ENCODE measurements at regions of chr3 and their contacts with region 1.

Region 1: DNA sequence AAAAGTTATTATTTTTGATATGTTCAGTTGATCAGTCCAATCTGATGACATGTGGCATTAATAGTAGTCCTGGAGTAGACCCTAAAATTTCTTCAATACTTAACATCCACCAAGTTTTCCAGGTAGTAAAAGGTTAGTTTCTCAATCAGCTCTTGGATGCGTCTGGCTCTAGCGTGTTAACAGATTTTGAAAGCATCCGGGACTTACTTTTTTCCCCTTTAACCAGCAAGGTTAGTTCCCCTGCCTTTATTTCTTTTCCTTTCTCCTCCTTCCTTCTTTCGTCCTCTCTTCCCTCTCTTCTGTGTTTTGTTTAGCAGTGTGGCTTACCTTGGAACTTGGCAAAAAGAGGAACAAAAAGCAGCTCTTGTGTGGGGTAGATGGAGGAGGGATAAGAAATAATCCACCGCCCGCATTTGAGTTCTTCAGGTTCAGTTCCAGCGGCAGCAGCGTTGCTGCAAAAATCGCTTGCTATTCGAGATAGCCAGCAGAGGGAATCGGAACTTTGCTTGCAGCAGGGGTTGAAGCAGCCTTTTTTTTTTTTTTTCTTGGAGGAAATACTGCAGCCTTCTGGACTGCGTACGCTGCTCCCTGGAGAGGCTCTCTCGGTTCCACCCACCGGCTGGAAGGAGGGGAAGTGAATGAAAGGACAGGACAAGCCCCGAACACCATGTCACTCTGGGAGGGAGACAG is at the start of gene RBMS3:
- DNase-seq: peak; percentile 90 to 93 (median 92)
- ATAC-seq: peak; percentile 91 to 95 (median 94)
- H3K4me3 ChIP-seq: peak within 1 kb of the TSS; percentile 43 to 84 (median 66)
- H3K27ac ChIP-seq: peak within 1 kb of the TSS; percentile 83 to 96 (median 91)
- H3K4me1 ChIP-seq: peaks cover 0 to 29% (median 13%) of the 10 kb centered on the region in 12 donors
- H3K27me3 ChIP-seq: no peaks in the 10 kb centered on the region
- CTCF ChIP-seq: peak; percentile 22 to 80 (median 54)
- POLR2A ChIP-seq: peak in 1 of 2 donors; percentile 58
- total RNA-seq, gene RBMS3: 19.0 to 35.6 (median 27.3) TPM

Region 2: GRCh38 chr3:28449398-28449797 is 831.2 kb before region 1 on chr3:
- intact Hi-C with region 1: no loop called
- DNase-seq: no peak
- ATAC-seq: no peak
- H3K4me3 ChIP-seq: no peak overlapping the region
- H3K27ac ChIP-seq: no peak overlapping the region
- H3K4me1 ChIP-seq: no peaks in the 10 kb centered on the region
- H3K27me3 ChIP-seq: no peaks in the 10 kb centered on the region
- CTCF ChIP-seq: no peak
- POLR2A ChIP-seq: no peak

Region 3: GRCh38 chr3:29144807-29145206 is 135.7 kb before region 1 on chr3:
- intact Hi-C with region 1: loop called in 2 of 10 experiments (anchors 5 to 10 kb)
- DNase-seq: peak in 4 of 5 donors; percentile 35 to 56 (median 44)
- ATAC-seq: peak; percentile 66 to 81 (median 78)
- H3K4me3 ChIP-seq: no peak overlapping the region
- H3K27ac ChIP-seq: no peak overlapping the region
- H3K4me1 ChIP-seq: peaks cover 0 to 32% (median 6%) of the 10 kb centered on the region in 12 donors
- H3K27me3 ChIP-seq: no peaks in the 10 kb centered on the region
- CTCF ChIP-seq: peak in 10 of 12 donors; percentile 21 to 62 (median 50)
- POLR2A ChIP-seq: no peak

Region 4: GRCh38 chr3:29324180-29324651 is 43.7 kb after region 1 on chr3:
- intact Hi-C with region 1: loop called in 3 of 10 experiments (anchors 5 kb)
- DNase-seq: peak in 4 of 5 donors; percentile 55 to 75 (median 58)
- ATAC-seq: peak; percentile 78 to 92 (median 86)
- H3K4me3 ChIP-seq: peak overlapping the region in 9 of 12 donors; percentile 8 to 49 (median 37)
- H3K27ac ChIP-seq: peak overlapping the region in 11 of 12 donors; percentile 50 to 90 (median 73)
- H3K4me1 ChIP-seq: peaks cover 0 to 59% (median 27%) of the 10 kb centered on the region in 12 donors
- H3K27me3 ChIP-seq: no peaks in the 10 kb centered on the region
- CTCF ChIP-seq: no peak
- POLR2A ChIP-seq: no peak

Region 5: DNA sequence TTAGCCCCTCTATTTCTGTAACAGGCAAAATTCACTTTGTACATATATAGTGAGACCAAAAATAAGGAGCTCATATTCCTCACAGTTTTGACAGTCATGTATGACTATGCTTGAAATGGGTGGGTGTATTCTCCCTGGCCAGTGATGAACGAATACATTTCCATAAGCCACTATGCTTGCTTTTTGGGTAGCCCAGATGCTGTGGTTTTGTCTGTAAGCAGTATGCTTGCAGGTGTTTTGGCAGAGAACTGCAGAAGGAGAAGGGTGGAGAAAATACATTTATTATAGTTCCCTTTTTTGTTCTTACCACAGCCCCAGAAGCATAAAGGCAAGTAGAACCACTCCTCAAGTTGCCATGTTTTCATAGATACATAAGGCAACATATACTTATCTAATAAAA is 131.6 kb after region 1 on chr3:
- intact Hi-C with region 1: loop called in 1 of 10 experiments (anchors 10 kb)
- DNase-seq: no peak
- ATAC-seq: no peak
- H3K4me3 ChIP-seq: no peak overlapping the region
- H3K27ac ChIP-seq: no peak overlapping the region
- H3K4me1 ChIP-seq: peaks cover 0 to 80% (median 35%) of the 10 kb centered on the region in 12 donors
- H3K27me3 ChIP-seq: no peaks in the 10 kb centered on the region
- CTCF ChIP-seq: no peak
- POLR2A ChIP-seq: no peak

Region 6: DNA sequence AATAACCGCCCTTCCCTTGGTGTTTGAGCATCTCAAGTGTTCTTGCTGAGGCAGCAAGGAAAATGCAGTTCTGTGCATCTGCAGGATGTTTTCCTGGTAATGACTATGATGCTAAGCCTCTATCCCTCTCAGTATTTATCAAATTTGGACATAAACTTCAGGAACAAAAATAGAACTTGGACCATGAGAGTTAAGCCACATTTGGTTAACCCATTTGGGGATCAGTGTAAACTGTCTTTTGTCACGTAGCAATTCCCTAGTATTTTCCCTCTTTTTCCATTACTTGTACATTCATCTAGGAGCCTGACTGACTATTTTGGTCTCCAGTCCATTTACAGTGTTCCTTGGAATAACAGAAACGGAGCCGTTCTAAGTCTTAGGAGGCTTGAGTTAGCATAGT is 251.1 kb after region 1 on chr3:
- intact Hi-C with region 1: loop called in 6 of 10 experiments (anchors 5 to 10 kb)
- DNase-seq: no peak
- ATAC-seq: peak; percentile 39 to 62 (median 47)
- H3K4me3 ChIP-seq: no peak overlapping the region
- H3K27ac ChIP-seq: peak overlapping the region in 8 of 12 donors; percentile 0 to 60 (median 39)
- H3K4me1 ChIP-seq: peaks cover 0 to 52% (median 21%) of the 10 kb centered on the region in 12 donors
- H3K27me3 ChIP-seq: no peaks in the 10 kb centered on the region
- CTCF ChIP-seq: no peak
- POLR2A ChIP-seq: no peak

Region 7: DNA sequence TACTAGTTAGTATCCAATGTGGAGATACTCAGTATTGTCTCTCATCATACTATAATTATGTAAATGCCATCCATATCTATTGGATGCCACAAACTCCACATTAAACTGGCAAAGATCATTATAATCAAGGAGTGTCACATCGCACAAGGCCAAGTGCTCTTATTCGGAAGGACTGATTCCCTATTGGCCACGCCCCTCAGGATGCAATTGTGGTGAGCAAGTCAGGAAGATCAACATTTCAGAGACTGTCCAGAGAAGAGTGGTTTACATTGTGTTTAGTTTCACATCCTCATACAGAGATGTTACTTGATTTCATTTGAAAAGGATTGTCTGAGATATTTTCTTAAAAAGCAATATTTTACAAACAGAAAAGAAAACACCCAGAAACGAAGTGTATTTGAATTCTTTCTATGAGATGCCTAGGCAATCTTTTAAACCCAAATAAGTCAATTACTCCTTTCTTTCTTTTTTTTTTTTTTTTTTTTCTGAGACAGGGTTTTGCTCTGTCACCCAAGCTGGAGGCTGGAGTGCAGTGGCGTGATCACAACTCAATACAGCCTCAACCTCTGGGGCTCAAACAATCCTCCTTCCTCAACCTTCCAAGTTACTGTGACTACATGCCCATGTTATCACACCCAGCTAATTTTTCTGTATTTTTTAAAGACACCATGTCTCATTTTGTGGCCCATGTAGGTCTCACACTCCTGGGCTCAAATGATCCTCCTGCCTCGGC is 369.4 kb after region 1 on chr3:
- intact Hi-C with region 1: loop called in 1 of 10 experiments (anchors 10 kb)
- DNase-seq: peak in 1 of 5 donors; percentile 39
- ATAC-seq: peak in 1 of 4 donors; percentile 64
- H3K4me3 ChIP-seq: no peak overlapping the region
- H3K27ac ChIP-seq: no peak overlapping the region
- H3K4me1 ChIP-seq: peaks cover 0 to 25% (median 7%) of the 10 kb centered on the region in 12 donors
- H3K27me3 ChIP-seq: no peaks in the 10 kb centered on the region
- CTCF ChIP-seq: no peak
- POLR2A ChIP-seq: no peak

Region 8: DNA sequence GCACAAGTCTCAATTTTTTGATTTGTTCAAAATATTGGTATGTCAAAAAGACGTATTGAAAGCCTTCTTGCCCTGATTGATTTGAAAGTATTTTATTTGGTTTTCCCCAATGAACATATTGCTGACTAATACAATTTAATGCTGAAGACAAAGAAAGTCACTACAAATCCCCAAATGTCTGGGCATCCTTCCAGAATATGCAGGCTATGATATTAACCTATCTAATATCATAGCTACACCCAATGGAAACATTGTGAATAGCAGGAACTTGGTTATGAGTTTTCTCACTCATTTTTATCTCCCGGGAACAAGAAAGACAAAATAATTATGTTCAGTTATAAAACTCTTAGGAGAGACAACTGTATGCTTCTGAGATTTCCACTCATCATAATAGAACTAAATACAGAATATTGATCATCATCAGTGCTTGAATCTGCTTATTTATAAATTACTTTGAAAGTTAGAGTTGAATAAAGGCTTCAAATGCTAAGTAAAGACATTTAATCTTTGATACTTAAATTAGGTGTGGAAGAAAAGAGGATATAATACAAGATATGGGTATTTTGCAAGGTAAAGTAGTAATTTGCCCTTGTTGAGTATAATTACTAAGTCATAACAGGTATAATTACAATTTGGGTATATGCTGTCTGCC is 484.2 kb after region 1 on chr3:
- intact Hi-C with region 1: loop called (anchors 2 to 5 kb)
- DNase-seq: peak in 2 of 5 donors; percentile 31 to 70
- ATAC-seq: peak; percentile 54 to 76 (median 66)
- H3K4me3 ChIP-seq: no peak overlapping the region
- H3K27ac ChIP-seq: peak overlapping the region in 1 of 12 donors; percentile 5
- H3K4me1 ChIP-seq: peaks cover 0 to 50% (median 23%) of the 10 kb centered on the region in 12 donors
- H3K27me3 ChIP-seq: no peaks in the 10 kb centered on the region
- CTCF ChIP-seq: peak; percentile 47 to 88 (median 73)
- POLR2A ChIP-seq: no peak